A673 (cell line): ENCODE measurements at regions of chr1 and their contacts with region 1.

Region 1: GRCh38 chr1:230231774-230232145 is 164.7 kb downstream of the GALNT2 start:
- DNase-seq: peak; percentile 91
- H3K4me3 ChIP-seq: peak overlapping the region; percentile 32
- H3K27ac ChIP-seq: peak overlapping the region; percentile 96
- H3K4me1 ChIP-seq: peaks cover 61% of the 10 kb centered on the region
- H3K27me3 ChIP-seq: no peaks in the 10 kb centered on the region
- CTCF ChIP-seq: no peak

Region 2: DNA sequence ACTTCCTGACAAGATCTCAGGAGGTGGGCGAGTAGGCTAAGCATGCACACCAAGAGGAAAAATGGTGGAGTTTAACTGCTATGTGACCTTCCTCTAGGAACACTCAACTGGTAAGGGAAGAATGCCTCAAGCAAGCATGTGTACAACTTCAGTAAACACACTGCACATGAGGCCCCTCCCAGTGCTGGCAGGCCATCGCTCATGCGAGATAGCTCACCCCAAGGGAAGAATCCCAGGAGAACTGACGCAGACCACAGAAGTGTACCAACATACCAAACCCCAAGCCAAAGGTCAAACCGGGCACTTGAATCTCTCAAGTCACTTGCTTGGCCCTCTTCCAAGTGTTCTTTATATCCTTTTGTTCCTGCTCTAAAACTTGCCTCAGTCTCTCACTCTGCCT is 205.2 kb before region 1 on chr1:
- CTCF ChIA-PET with region 1: no interaction called
- POLR2A ChIA-PET with region 1: no interaction called
- intact Hi-C with region 1: no loop called
- DNase-seq: no peak
- H3K4me3 ChIP-seq: no peak overlapping the region
- H3K27ac ChIP-seq: no peak overlapping the region
- H3K4me1 ChIP-seq: no peaks in the 10 kb centered on the region
- H3K27me3 ChIP-seq: no peaks in the 10 kb centered on the region
- CTCF ChIP-seq: no peak

Region 3: GRCh38 chr1:230270559-230271281 is 39.0 kb after region 1 on chr1:
- CTCF ChIA-PET with region 1: no interaction called
- POLR2A ChIA-PET with region 1: no interaction called
- intact Hi-C with region 1: loop called (anchors 2 kb)
- DNase-seq: peak; percentile 97
- H3K4me3 ChIP-seq: peak overlapping the region; percentile 9
- H3K27ac ChIP-seq: peak overlapping the region; percentile 73
- H3K4me1 ChIP-seq: peaks cover 37% of the 10 kb centered on the region
- H3K27me3 ChIP-seq: no peaks in the 10 kb centered on the region
- CTCF ChIP-seq: no peak